ENCODE measurements at regions of chr13 and their contacts with region 1.

Region 1: DNA sequence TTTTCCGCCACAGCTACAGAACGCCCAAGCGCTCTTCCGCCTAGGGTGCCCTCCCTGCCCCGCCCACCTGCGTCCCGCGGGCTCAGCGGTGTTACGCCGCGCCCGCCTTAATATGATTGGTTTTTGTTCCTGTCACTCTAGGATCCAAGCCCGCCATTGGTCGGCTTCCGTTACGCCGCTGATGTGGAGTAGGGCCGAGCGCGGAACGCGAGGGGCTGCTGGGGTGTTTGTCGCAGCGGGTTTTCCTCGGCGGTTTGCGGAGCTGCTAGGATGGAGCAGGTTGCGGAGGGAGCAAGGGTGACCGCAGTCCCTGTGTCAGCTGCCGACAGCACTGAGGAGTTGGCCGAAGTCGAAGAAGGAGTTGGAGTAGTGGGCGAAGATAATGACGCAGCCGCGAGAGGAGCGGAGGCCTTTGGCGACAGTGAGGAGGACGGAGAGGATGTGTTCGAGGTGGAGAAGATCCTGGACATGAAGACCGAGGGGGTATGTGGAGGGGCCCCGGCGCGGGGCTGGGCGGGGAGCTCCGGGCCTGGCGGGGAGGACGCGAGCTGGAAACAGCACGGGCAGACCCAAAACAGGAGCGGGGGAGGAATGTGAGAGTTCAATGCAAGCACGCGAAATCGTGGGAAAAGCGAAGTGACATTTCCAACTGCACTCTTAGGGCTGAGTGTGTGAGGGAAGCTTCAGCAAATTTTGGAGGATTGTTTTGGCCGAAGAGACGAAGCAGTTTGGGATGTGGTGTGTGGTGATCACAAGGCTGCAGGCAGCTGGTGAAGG is at the start of gene MPHOSPH8:
- DNase-seq: peak; percentile 94
- H3K4me3 ChIP-seq: peak within 1 kb of the TSS; percentile 73 to 95 (median 81)
- H3K27ac ChIP-seq: peak within 1 kb of the TSS; percentile 82 to 89 (median 87)
- H3K4me1 ChIP-seq: peaks cover 15% of the 10 kb centered on the region in 2 donors
- H3K27me3 ChIP-seq: no peaks in the 10 kb centered on the region
- CTCF ChIP-seq: no peak
- POLR2A ChIP-seq: peak in 1 of 2 donors; percentile 95
- total RNA-seq, gene MPHOSPH8: 28.7 to 35.1 (median 31.7) TPM

Region 2: GRCh38 chr13:19782049-19782726 is 148.5 kb after region 1 on chr13:
- intact Hi-C with region 1: loop called (anchors 10 kb)
- DNase-seq: peak; percentile 58
- H3K4me3 ChIP-seq: peak overlapping the region; percentile 53 to 100 (median 94)
- H3K27ac ChIP-seq: peak overlapping the region; percentile 88 to 95 (median 92)
- H3K4me1 ChIP-seq: peaks cover 7 to 8% of the 10 kb centered on the region in 2 donors
- H3K27me3 ChIP-seq: no peaks in the 10 kb centered on the region
- CTCF ChIP-seq: no peak
- POLR2A ChIP-seq: no peak

Region 3: DNA sequence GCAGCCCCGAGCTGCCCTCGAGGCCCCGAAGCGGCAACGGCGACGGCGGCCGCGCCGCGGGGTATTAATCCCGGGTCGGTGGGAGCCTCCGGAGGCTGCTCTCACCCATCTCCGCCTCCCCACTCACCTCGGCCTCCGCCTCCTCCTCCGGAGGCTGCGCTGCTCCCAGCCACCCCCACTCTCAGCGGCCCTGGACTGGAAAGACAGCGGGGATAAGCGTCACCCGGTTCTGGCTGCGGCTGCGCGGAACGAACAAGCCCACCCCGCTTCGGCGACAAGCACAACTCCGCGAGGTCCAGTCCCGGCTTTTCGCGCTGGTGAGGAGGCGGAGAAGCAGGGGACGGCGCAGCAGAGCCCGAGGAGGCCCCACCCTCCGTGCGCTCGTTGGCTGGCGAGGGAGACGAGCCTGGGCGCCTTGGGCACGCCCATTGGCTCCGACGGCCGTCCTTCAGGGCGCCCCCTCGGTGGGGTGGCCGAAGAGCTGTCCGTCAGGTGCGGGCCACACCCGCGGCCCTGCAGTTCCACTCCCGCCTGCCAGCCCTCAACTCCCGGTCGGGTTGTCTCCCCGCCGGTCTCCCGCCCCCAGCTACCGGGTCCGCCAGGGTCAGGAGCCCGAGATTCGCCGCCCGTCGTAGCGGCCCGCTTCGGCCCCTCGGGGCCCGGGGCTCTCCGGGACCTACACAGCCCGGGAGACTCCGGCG is 229.8 kb after region 1 on chr13 and contains the start of gene ZMYM5:
- intact Hi-C with region 1: loop called (anchors 5 kb)
- DNase-seq: peak; percentile 98 to 99
- H3K4me3 ChIP-seq: peak within 1 kb of the TSS; percentile 35 to 97 (median 78)
- H3K27ac ChIP-seq: peak within 1 kb of the TSS; percentile 100
- H3K4me1 ChIP-seq: peaks cover 16 to 17% of the 10 kb centered on the region in 2 donors
- H3K27me3 ChIP-seq: no peaks in the 10 kb centered on the region
- CTCF ChIP-seq: peak in 1 of 6 experiments; percentile 14
- POLR2A ChIP-seq: peak; percentile 72 to 99
- total RNA-seq, gene ZMYM5: 21.5 to 27.8 (median 24.7) TPM